ENCODE measurements at regions of chr10 and their contacts with region 1.

Region 1: DNA sequence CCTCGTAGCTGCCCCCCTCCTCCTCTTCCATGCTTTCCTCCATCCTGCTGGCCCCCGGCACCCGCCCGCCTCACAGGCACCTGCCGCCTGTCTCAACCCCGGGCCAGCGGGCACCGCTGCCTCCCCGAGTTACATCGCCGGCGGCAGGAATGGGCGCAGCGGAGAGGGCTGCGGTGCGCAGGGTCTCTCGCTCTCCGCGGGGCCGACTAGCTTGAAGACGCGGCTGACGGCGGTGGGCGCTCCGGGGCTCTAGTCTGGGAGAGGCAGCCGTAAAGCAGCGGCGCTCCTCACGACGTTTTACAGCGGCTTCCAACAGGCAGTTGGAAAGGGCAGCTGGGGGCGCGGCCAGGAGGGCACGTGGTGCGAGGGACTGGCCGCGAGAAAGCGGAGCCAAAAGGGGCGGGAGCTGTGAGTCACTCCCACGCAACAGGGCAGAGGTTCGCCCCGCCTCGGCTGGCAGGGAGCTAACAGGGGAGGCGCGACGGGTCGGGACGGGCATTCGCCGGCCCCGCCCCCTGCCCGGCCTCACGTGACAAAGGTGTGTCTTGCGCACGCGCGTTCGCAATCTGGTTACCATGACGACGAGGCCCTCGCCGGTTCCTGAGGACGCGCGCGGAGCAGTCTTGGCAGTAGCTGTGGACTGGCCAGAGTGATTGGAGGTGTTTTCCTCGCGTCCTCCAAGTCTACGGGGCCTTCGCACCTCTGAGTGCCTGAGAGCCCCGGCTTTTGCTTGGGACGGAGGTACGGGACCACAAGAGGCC is at the start of gene CACUL1:
- DNase-seq: peak; percentile 99 to 100 (median 100)
- ATAC-seq: peak; percentile 99
- H3K4me3 ChIP-seq: peak within 1 kb of the TSS; percentile 92
- H3K4me3 Mint-ChIP-seq: peak within 1 kb of the TSS; percentile 92 to 98 (median 95)
- H3K27ac ChIP-seq: peak within 1 kb of the TSS; percentile 80
- H3K27ac Mint-ChIP-seq: peak within 1 kb of the TSS; percentile 86 to 96 (median 92)
- H3K4me1 ChIP-seq: peaks cover 17 to 24% of the 10 kb centered on the region in 2 donors
- H3K4me1 Mint-ChIP-seq: peaks cover 24 to 47% (median 40%) of the 10 kb centered on the region in 7 donors
- H3K27me3 ChIP-seq: no peaks in the 10 kb centered on the region
- H3K27me3 Mint-ChIP-seq: peaks cover 0 to 19% (median 0%) of the 10 kb centered on the region in 5 donors
- total RNA-seq, gene CACUL1: 28.0 to 66.6 (median 34.3) TPM

Region 2: DNA sequence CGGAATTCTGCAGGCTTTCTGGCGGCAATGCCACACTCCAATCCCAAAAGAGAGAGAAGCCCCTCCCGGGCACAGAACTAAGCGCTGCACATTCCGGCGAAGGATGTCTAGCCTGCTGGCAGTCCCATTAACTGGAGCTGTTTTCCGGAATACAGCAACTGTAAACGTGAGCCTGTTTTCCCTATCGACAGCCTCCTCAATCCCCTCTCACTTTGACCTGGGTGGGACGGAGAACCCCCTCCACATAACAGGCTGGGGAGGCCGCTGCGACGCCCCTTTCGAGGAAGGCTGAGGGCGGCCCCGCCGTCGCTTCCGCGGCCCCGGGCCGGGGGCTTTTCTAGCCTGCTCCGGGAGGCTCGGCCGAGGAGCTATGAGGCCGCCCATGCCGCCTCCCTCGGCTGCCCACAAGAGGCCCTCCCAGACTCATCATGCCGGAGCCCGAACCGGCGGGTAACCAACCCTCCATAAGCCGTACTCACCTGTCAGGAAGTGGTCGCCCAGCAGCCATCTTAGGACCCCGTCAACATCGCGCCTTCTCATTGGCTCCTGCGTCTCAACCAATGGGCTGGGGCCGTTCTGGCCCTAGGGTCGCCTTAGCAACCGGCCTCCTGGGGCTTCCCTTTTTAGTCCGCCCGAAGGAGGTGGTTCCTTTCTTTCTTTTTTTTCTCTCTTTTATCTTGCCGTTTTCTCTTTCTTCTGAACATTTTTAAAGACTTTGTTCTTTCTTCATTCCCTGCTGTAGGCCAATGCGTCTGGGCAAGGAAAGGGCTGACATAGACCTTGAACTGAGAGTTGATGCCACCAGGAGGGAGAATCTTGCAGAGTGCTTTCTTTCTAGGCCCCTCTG is 412.9 kb before region 1 on chr10 and contains the start of gene FAM204A:
- CTCF ChIA-PET with region 1: no interaction called
- POLR2A ChIA-PET with region 1: no interaction called
- intact Hi-C with region 1: loop called (anchors 1 kb)
- DNase-seq: peak; percentile 92 to 99 (median 97)
- ATAC-seq: peak; percentile 99
- H3K4me3 ChIP-seq: peak within 1 kb of the TSS; percentile 69
- H3K4me3 Mint-ChIP-seq: peak within 1 kb of the TSS; percentile 88 to 98 (median 96)
- H3K27ac ChIP-seq: peak within 1 kb of the TSS; percentile 78
- H3K27ac Mint-ChIP-seq: peak within 1 kb of the TSS; percentile 84 to 98 (median 95)
- H3K4me1 ChIP-seq: peaks cover 22% of the 10 kb centered on the region in 2 donors
- H3K4me1 Mint-ChIP-seq: peaks cover 20 to 69% (median 59%) of the 10 kb centered on the region in 7 donors
- H3K27me3 ChIP-seq: no peaks in the 10 kb centered on the region
- H3K27me3 Mint-ChIP-seq: peaks cover 0 to 2% (median 0%) of the 10 kb centered on the region in 5 donors
- total RNA-seq, gene FAM204A: 56.6 to 69.6 (median 63.0) TPM

Region 3: GRCh38 chr10:118729641-118730258 is 25.1 kb before region 1 on chr10:
- CTCF ChIA-PET with region 1: interaction called, 12 read pairs
- POLR2A ChIA-PET with region 1: interaction called, 4 read pairs
- intact Hi-C with region 1: loop called (anchors 1 kb)
- DNase-seq: peak in 7 of 9 donors; percentile 22 to 54 (median 51)
- ATAC-seq: peak; percentile 85
- H3K4me3 ChIP-seq: no peak overlapping the region
- H3K4me3 Mint-ChIP-seq: peak overlapping the region in 9 of 10 donors; percentile 26 to 79 (median 65)
- H3K27ac ChIP-seq: peak overlapping the region; percentile 14
- H3K27ac Mint-ChIP-seq: peak overlapping the region; percentile 29 to 95 (median 78)
- H3K4me1 ChIP-seq: peaks cover 39 to 58% of the 10 kb centered on the region in 2 donors
- H3K4me1 Mint-ChIP-seq: peaks cover 47 to 80% (median 69%) of the 10 kb centered on the region in 7 donors
- H3K27me3 ChIP-seq: no peaks in the 10 kb centered on the region
- H3K27me3 Mint-ChIP-seq: no peaks in the 10 kb centered on the region

Region 4: GRCh38 chr10:119103903-119104652 is 349.2 kb after region 1 on chr10 and contains the start of gene DENND10:
- CTCF ChIA-PET with region 1: no interaction called
- POLR2A ChIA-PET with region 1: no interaction called
- intact Hi-C with region 1: loop called in 1 of 2 experiments (anchors 2 kb)
- DNase-seq: peak; percentile 18 to 80 (median 51)
- ATAC-seq: peak; percentile 93
- H3K4me3 ChIP-seq: peak within 1 kb of the TSS; percentile 45
- H3K4me3 Mint-ChIP-seq: peak within 1 kb of the TSS; percentile 65 to 94 (median 85)
- H3K27ac ChIP-seq: peak within 1 kb of the TSS; percentile 69
- H3K27ac Mint-ChIP-seq: peak within 1 kb of the TSS; percentile 62 to 96 (median 84)
- H3K4me1 ChIP-seq: peaks cover 6 to 20% of the 10 kb centered on the region in 2 donors
- H3K4me1 Mint-ChIP-seq: peaks cover 5 to 35% (median 14%) of the 10 kb centered on the region in 7 donors
- H3K27me3 ChIP-seq: no peaks in the 10 kb centered on the region
- H3K27me3 Mint-ChIP-seq: no peaks in the 10 kb centered on the region
- total RNA-seq, gene DENND10: 22.1 to 41.7 (median 28.8) TPM

Region 5: DNA sequence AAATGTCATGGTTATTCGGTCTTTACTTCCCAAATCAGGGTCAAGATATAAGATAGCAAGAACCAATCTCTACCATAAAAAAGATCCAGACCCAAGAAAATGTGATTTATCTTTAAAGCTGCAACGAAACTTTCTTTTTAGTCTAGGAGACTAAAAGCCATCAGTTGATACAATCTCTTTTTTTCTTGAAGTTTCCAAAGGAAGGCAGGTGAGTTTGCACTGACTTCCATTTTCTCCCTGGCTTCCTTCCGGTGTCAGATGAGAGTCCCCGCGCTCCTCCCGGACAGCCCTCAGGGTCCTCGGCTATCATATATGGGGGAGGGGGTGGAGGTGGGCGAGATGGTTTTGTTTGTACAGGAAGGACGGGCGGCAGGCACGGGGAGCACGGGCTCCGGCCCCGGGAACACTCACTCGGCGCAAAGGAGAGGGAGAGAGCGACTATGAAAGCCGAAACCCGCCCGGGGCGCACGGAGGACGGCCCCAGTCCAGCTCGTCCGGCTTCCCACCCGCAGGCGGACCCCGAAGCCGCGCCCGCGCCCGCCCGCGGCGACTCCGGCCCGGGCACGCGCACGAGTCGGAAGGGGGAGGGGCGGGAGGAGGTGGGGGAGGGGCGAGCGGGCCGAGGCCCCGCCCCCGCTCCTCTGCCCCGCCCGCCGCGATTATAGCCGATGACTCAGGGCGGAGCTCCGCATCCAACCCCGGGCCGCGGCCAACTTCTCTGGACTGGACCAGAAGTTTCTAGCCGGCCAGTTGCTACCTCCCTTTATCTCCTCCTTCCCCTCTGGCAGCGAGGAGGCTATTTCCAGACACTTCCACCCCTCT is 896.0 kb after region 1 on chr10 and contains the start of gene BAG3:
- CTCF ChIA-PET with region 1: no interaction called
- POLR2A ChIA-PET with region 1: no interaction called
- intact Hi-C with region 1: loop called (anchors 5 to 10 kb)
- DNase-seq: peak; percentile 50 to 84 (median 67)
- ATAC-seq: peak; percentile 88
- H3K4me3 ChIP-seq: peak within 1 kb of the TSS; percentile 83
- H3K4me3 Mint-ChIP-seq: peak within 1 kb of the TSS; percentile 93 to 100 (median 97)
- H3K27ac ChIP-seq: peak within 1 kb of the TSS; percentile 93
- H3K27ac Mint-ChIP-seq: peak within 1 kb of the TSS; percentile 91 to 99 (median 97)
- H3K4me1 ChIP-seq: peaks cover 20 to 29% of the 10 kb centered on the region in 2 donors
- H3K4me1 Mint-ChIP-seq: peaks cover 29 to 48% (median 44%) of the 10 kb centered on the region in 7 donors
- H3K27me3 ChIP-seq: no peaks in the 10 kb centered on the region
- H3K27me3 Mint-ChIP-seq: peaks cover 0 to 2% (median 0%) of the 10 kb centered on the region in 5 donors
- total RNA-seq, gene BAG3: 21.9 to 44.5 (median 23.1) TPM

Region 6: GRCh38 chr10:119892188-119893065 is 1137.5 kb after region 1 on chr10 and contains the start of gene SEC23IP:
- CTCF ChIA-PET with region 1: no interaction called
- POLR2A ChIA-PET with region 1: interaction called, 3 read pairs
- intact Hi-C with region 1: loop called in 1 of 2 experiments (anchors 2 kb)
- DNase-seq: peak; percentile 77 to 94 (median 83)
- ATAC-seq: peak; percentile 99
- H3K4me3 ChIP-seq: peak within 1 kb of the TSS; percentile 95
- H3K4me3 Mint-ChIP-seq: peak within 1 kb of the TSS; percentile 92 to 100 (median 98)
- H3K27ac ChIP-seq: peak within 1 kb of the TSS; percentile 89
- H3K27ac Mint-ChIP-seq: peak within 1 kb of the TSS; percentile 95 to 99 (median 98)
- H3K4me1 ChIP-seq: peaks cover 12 to 21% of the 10 kb centered on the region in 2 donors
- H3K4me1 Mint-ChIP-seq: peaks cover 40 to 53% (median 48%) of the 10 kb centered on the region in 7 donors
- H3K27me3 ChIP-seq: no peaks in the 10 kb centered on the region
- H3K27me3 Mint-ChIP-seq: peaks cover 0 to 4% (median 0%) of the 10 kb centered on the region in 5 donors
- total RNA-seq, gene SEC23IP: 34.8 to 68.3 (median 54.4) TPM

Measured in naive thymus-derived CD4-positive, alpha-beta T cell (primary cell).